ENCODE measurements at regions of chr3 and their contacts with region 1.

Region 1: GRCh38 chr3:185976977-185977678 is 39.3 kb upstream of the TRA2B start:
- ATAC-seq: peak in 6 of 8 experiments; percentile 48 to 95 (median 88)
- H3K4me3 ChIP-seq: no peak overlapping the region
- H3K27ac ChIP-seq: no peak overlapping the region
- H3K4me1 ChIP-seq: no peaks in the 10 kb centered on the region

Region 2: GRCh38 chr3:186108941-186109865 is 132.1 kb after region 1 on chr3 and contains the start of gene ETV5:
- in situ Hi-C with region 1: loop called in 2 of 9 experiments (anchors 10 to 25 kb)
- ATAC-seq: peak; percentile 87 to 92 (median 90)
- H3K4me3 ChIP-seq: peak within 1 kb of the TSS; percentile 52 to 75 (median 69)
- H3K27ac ChIP-seq: peak within 1 kb of the TSS; percentile 55 to 77
- H3K4me1 ChIP-seq: peaks cover 7 to 10% of the 10 kb centered on the region in 2 donors
- total RNA-seq, gene ETV5: 4.0 to 36.7 (median 10.8) TPM

Region 3: DNA sequence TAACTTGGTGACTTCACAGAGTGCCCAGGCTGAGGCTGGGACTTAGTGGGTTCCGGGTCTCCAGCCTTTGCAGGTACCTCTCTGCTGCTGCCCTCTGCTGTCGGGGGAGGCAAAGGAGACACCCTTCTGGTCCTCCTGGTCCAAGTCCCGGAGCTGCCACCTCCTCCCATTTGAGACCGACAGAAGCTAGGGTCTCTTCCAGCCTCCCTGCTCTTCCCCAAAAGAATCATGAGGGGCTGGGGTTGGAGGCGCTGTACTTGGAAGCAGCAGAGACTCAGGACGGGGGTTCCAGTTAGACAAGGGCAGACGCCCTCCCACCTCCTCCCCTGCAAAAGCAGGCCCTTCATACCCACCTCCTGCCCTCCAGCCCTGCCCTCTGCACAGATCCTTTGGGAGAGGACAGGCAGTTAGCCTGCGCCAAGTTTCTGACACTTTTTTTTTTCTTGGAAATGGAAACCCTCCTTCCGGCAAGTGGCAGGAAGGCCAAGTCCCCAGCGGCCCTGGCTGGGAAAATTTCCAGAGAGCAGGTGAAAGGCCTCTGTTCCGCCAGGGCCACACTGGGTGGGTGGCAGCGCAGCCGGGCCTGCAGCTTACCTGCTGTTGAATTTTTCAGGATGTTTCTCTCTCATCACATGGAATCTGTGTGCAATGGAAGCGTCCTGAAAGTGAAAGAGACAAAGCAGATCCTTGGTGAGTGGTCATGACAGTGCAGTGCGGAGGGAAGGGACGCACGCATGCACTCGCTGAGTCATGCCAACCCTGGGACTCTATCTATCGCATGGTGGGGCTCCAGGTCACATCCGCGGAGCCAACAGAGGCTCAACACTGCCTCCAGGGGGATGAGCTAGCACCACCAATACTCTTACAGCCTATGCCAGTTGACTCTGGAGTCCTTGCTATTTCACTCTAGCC is 265.0 kb after region 1 on chr3:
- in situ Hi-C with region 1: loop called in 1 of 9 experiments (anchors 25 kb)
- ATAC-seq: peak; percentile 71 to 99 (median 87)
- H3K4me3 ChIP-seq: no peak overlapping the region
- H3K27ac ChIP-seq: no peak overlapping the region
- H3K4me1 ChIP-seq: no peaks in the 10 kb centered on the region

Region 4: DNA sequence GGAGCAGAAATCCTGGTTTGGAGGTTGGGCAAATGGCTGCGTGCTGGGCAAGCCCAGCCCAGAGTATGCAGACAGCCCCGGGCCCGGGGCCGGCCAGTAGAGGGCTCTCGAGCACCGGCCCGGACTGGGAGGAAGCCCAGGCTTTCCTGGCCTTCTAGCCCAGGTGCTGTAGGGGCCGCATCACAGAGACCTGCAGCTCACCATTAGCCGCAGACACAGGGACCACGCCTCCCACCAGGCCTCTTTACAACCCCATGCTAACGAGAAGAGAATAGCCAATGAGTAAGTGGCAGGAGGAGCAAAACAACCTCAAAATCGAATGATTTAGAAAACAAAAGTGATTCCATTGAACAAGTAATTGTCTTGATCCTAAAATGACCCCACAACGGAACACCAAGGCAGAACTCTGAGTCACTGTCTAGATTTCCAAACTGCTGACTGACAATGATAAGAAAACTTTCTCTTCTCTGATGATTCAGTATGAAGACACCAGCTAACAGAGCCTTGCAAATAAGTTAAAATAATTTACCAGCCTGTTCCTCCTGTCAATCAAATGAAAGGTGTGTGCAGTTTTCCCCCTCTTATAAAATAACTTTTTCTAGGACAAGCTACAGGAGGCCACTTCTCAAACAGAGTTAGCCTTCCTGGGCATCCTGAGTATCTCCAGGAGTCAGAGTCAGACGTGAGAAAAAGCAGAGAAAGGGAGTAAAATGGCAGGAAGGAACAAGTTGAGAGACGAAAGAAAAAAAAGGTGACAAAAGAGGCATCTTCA is 282.7 kb after region 1 on chr3:
- in situ Hi-C with region 1: loop called in 5 of 9 experiments (anchors 25 kb)
- ATAC-seq: peak; percentile 93 to 100 (median 100)
- H3K4me3 ChIP-seq: no peak overlapping the region
- H3K27ac ChIP-seq: no peak overlapping the region
- H3K4me1 ChIP-seq: peaks cover 0 to 6% of the 10 kb centered on the region in 2 donors

Region 5: DNA sequence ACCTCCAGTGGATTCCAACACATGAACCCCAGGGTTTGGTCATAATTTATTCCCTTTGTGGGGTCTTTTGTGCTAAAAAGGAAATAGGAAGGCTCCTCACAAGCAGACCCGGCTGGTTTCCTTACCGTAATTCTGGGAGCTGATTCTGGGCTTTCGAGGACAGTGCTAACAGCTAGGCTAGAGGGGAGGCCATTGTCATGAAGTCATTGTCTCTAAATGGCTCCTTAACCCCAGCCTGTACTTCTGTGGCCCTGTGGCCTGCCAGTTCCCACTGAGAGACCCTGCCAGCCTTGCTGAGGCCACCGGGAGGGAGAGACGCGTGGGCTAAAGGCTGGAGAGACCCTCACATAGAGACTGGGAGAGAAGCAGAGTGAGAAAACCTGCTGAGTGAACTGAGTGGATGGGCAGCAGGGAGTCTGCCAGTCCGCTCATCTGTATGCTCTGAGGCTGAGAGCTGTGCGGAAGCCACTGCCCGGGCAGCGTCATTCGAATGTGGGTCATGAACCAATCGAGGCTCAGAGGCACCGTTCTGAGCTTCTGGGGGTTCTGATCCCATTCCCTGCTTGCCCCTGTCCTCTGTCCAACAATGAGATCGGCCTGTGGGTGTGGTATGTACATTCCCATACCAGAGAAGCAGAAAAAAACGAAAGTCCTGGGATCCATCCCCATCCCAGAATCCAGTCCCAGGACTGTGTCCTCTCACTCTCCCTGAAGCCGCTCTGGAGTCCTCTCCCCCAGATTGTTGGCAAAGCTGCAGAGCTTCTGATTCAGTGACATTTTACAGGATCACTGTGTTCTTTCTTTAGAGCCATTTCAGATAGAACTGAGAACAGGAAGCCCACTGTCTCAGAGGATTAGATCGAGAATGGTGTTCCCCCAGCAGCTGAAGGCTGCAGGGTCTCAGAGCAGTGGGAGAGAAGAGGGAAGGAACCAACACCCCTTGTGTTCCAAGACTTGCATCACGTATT is 406.2 kb after region 1 on chr3:
- in situ Hi-C with region 1: no loop called
- ATAC-seq: no peak
- H3K4me3 ChIP-seq: no peak overlapping the region
- H3K27ac ChIP-seq: no peak overlapping the region
- H3K4me1 ChIP-seq: no peaks in the 10 kb centered on the region

Region 6: DNA sequence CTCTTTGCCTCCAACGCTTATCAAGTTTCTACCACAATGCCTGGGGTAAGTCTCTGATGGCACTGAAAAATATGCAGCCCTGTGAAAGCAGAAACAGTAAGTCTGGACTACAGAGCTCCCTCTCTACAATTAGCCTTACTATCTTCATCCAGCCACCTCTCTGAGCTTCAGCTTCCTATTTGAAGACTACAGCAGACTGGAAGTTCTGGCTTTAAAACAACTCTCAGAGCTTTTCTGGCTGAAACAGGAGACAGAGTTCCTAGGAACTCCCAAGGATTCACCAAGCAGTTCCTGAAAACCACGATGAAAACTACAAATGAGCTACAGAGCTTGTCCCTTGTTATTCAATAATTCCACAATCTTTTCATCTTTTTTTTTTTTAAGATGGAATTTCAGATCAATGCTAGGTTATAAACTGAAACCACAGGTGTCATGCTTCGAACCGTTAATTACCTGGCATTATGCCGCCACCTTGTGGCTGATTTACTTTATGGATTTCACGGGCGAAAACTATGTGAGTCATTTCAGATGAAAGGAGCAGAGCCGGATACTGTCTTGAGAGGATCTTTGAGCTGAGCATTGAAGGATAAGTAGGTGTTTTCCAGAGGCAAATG is 563.2 kb after region 1 on chr3:
- in situ Hi-C with region 1: loop called in 8 of 9 experiments (anchors 10 to 25 kb)
- ATAC-seq: peak; percentile 73 to 95 (median 82)
- H3K4me3 ChIP-seq: peak overlapping the region in 1 of 5 donors; percentile 6
- H3K27ac ChIP-seq: no peak overlapping the region
- H3K4me1 ChIP-seq: no peaks in the 10 kb centered on the region

Region 7: GRCh38 chr3:186570096-186570940 is 593.2 kb after region 1 on chr3 and contains the start of gene DNAJB11:
- in situ Hi-C with region 1: loop called in 1 of 9 experiments (anchors 25 kb)
- ATAC-seq: peak; percentile 86 to 90 (median 88)
- H3K4me3 ChIP-seq: peak within 1 kb of the TSS; percentile 79 to 100 (median 92)
- H3K27ac ChIP-seq: peak within 1 kb of the TSS; percentile 78 to 79
- H3K4me1 ChIP-seq: peaks cover 3 to 11% of the 10 kb centered on the region in 2 donors
- total RNA-seq, gene DNAJB11: 45.3 to 94.0 (median 72.5) TPM

Region 8: DNA sequence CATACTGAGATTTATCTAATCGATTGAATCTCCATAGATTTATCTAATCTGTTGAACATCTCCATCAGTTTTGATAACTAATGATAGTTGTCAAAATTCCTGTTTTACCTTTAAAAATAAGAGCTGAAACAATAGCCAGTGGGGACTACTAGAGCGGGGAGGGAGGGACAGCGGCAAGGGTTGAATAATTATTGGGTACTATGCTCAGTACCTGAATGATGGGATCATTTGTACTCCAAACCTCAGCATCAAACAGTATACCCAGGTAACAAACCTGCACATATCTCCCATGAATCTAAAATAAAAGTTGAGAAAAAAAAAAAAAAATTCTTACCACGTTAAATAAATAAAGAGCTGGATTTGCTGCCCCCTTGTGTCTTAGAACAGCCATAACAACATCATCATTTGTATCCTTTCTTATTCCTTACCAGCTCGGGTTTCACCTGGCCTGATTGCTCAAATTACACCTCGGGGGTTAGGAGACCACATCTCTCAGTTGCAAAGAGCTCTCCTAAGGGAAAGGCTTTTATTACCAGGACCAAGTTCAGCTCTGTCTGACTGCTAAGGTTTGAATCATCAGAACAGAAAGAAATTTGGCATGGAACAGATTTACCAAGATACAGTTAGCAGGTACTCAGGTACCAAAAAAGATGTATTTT is 1187.9 kb after region 1 on chr3:
- in situ Hi-C with region 1: loop called in 1 of 9 experiments (anchors 25 kb)
- ATAC-seq: peak in 3 of 8 experiments; percentile 13 to 69 (median 15)
- H3K4me3 ChIP-seq: no peak overlapping the region
- H3K27ac ChIP-seq: no peak overlapping the region
- H3K4me1 ChIP-seq: no peaks in the 10 kb centered on the region

Measured in motor neuron (in vitro differentiated cells).